Activated T-helper 2 cell treated with anti-CD3 and anti-CD28 coated beads, Interferon-gamma antibody, Interleukin-2, Interleukin-4, amounts not matched to agents 10 μg/mL and 5 μg/mL and 100 μg/mL, durations not matched to agents 14 hours and 24 hours and 36 hours (primary cell): ENCODE measurements at regions of chr2 and their contacts with region 1.

Region 1: DNA sequence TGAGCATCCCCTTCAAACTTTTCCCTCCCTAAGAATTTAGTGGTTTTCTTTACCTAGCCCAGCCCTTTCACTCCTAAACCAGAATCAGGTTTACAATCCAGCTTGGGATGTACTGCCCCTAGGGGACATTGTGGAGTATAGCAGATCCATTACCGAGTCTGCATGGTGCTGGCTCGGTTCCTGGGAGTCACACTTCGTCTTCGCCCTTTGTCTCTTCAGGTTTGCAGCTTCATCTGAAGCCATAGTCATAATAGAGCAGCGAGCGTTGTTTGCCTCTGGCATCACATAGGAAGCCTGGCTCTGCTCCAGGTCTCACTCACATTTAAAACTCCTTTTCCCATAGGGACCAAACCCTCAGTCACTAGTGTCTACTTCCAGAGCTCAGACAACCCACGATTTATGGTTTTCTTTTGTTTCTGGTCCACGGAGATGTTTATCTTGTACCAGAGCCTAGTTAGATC is 16.8 kb upstream of the LYPD6 start:
- DNase-seq: no peak
- H3K4me3 Mint-ChIP-seq: no peak overlapping the region
- H3K27ac Mint-ChIP-seq: no peak overlapping the region
- H3K4me1 Mint-ChIP-seq: peaks cover 3% of the 10 kb centered on the region
- H3K27me3 Mint-ChIP-seq: peaks cover 3% of the 10 kb centered on the region

Region 2: DNA sequence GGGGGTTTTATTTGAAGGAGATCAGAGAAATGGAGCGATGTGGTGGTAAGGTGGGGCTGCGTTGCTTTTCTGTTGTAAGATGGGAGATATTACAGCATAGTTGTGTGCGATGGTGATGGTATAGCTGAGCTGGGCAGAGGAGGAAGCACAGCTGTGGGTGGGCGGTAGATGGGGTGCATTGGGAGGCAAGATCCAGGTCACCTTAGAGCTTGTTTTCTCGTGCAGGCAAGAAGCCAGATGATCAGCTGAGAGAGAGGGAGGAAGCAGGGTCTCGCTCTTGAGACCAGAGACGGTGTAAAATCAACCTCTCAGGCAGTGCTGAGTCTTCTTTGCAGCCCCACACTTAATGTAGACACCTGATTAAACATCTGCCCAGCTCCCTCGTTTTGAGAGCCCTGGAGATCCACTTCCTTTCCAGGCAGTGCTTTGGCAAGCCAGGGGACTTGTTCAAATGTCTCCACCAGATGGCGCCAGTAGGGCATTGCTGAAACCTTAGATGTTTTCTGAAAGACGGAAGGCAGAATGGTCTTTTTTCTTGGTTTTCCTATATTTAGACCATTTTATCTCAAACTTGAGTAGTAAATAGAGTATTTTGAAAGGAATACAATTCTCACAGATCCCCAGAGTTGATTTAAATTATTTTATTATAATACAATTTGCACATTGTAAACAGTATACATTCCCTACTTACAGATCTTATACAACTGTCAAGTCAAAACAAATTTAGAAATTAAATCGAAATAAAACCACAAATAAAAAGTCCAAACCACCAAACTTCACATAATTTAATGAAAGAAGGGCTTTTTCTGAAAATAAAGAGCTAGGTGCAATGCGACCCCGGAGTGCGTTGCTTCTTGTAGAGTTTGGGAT is 296.2 kb before region 1 on chr2:
- intact Hi-C with region 1: loop called (anchors 5 kb)
- DNase-seq: peak; percentile 50
- H3K4me3 Mint-ChIP-seq: no peak overlapping the region
- H3K27ac Mint-ChIP-seq: no peak overlapping the region
- H3K4me1 Mint-ChIP-seq: peaks cover 3% of the 10 kb centered on the region
- H3K27me3 Mint-ChIP-seq: no peaks in the 10 kb centered on the region

Region 3: DNA sequence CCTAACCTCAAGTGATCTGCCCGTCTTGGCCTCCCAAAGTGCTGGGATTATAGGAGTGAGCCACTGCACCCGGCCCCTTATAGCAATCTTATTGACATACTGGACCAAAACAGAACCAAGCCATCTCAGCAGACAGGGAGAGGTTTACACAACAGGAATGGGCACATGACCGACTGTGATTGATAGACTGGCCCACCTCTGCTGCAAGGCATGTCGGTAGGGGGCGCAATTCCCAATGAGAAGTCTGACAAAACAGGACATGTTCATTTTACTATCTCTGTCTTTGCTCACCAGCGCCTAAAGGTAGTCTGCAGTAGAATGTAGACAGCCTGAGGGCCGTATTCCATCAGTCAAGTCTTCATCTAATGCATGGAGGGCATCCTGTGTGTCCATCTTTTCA is 273.1 kb before region 1 on chr2:
- intact Hi-C with region 1: loop called (anchors 5 kb)
- DNase-seq: peak; percentile 28
- H3K4me3 Mint-ChIP-seq: no peak overlapping the region
- H3K27ac Mint-ChIP-seq: no peak overlapping the region
- H3K4me1 Mint-ChIP-seq: no peaks in the 10 kb centered on the region
- H3K27me3 Mint-ChIP-seq: peaks cover 75% of the 10 kb centered on the region